ENCODE measurements at regions of chr15 and their contacts with region 1.

Region 1: GRCh38 chr15:50049871-50050270 is 69.2 kb downstream of the ATP8B4 start:
- DNase-seq: no peak
- ATAC-seq: no peak

Region 2: GRCh38 chr15:50028333-50028732 is 21.5 kb before region 1 on chr15:
- intact Hi-C with region 1: loop called (anchors 2 kb)
- DNase-seq: no peak
- ATAC-seq: no peak

Measured in left ventricle myocardium superior (tissue), 1 donor.